HAP-1 (cell line): ENCODE measurements at regions of chr6 and their contacts with region 1.

Region 1: GRCh38 chr6:10510592-10511367 is 10.4 kb upstream of the GCNT2 start:
- DNase-seq: peak; percentile 52 to 73
- H3K4me3 ChIP-seq: no peak overlapping the region
- H3K4me1 ChIP-seq: peaks cover 7% of the 10 kb centered on the region
- H3K27me3 ChIP-seq: no peaks in the 10 kb centered on the region

Region 2: DNA sequence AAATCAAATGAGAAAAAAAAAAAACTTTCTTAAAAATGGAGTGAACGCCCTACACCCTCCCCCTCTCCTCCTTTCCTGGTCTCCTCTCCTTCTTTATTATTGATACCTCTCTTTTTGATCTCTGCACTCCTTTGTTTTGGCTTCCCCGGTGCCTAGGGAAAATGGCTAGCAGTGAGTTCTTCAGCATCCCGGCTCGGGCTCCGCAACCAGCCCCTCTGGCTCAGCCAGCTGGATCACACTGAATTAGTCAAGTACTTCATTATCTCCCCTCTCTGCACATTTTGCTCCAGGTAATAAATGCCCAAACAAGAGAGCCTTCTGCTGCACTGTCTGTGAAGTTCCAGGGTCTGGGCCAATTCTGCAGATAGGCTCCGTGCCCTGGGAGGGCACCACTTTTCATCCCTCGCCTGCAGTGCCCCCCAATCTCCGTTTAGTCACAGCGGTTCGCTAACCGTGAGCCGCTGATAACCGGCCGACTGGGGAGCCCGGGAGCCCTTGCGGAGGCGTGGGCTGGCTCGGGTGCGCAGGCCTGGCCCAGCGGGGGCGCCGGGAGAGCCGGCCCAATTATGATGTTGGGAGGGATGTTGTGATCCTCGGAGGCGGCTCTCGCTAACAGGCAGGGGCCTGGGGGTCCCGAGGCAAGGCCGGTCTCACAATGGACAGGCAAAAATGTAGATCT is 397.8 kb before region 1 on chr6:
- in situ Hi-C with region 1: no loop called
- DNase-seq: no peak
- H3K4me3 ChIP-seq: no peak overlapping the region
- H3K4me1 ChIP-seq: no peaks in the 10 kb centered on the region
- H3K27me3 ChIP-seq: no peaks in the 10 kb centered on the region

Region 3: GRCh38 chr6:10694302-10695085 is 183.7 kb after region 1 on chr6 and contains the starts of genes C6orf52 and PAK1IP1:
- in situ Hi-C with region 1: loop called (anchors 25 kb)
- DNase-seq: peak; percentile 89 to 95
- H3K4me3 ChIP-seq: peak within 1 kb of the TSS; percentile 87
- H3K4me1 ChIP-seq: peaks cover 30% of the 10 kb centered on the region
- H3K27me3 ChIP-seq: no peaks in the 10 kb centered on the region

Region 4: GRCh38 chr6:11766589-11767450 is 1256.0 kb after region 1 on chr6:
- in situ Hi-C with region 1: no loop called
- DNase-seq: no peak
- H3K4me3 ChIP-seq: no peak overlapping the region
- H3K4me1 ChIP-seq: 0 out of 2 replicates have a peak, but pooled peaks cover 2% of the 10 kb centered on the region
- H3K27me3 ChIP-seq: no peaks in the 10 kb centered on the region